Activated CD4-positive, alpha-beta T cell treated with anti-CD3 and anti-CD28 coated beads, Interleukin-2, amount 10 ng/mL, durations not matched to agents 24 days and 14 days (primary cell): ENCODE measurements at regions of chr16 and their contacts with region 1.

Region 1: GRCh38 chr16:89409161-89409711 is 81.1 kb downstream of the ANKRD11 start:
- DNase-seq: peak; percentile 89
- H3K4me3 Mint-ChIP-seq: peak overlapping the region; percentile 58
- H3K27ac Mint-ChIP-seq: peak overlapping the region; percentile 84
- H3K4me1 Mint-ChIP-seq: peaks cover 77% of the 10 kb centered on the region
- H3K27me3 Mint-ChIP-seq: no peaks in the 10 kb centered on the region

Region 2: GRCh38 chr16:88948781-88949490 is 460.3 kb before region 1 on chr16:
- intact Hi-C with region 1: no loop called
- DNase-seq: no peak
- H3K4me3 Mint-ChIP-seq: no peak overlapping the region
- H3K27ac Mint-ChIP-seq: no peak overlapping the region
- H3K4me1 Mint-ChIP-seq: no peaks in the 10 kb centered on the region
- H3K27me3 Mint-ChIP-seq: peaks cover 16% of the 10 kb centered on the region

Region 3: DNA sequence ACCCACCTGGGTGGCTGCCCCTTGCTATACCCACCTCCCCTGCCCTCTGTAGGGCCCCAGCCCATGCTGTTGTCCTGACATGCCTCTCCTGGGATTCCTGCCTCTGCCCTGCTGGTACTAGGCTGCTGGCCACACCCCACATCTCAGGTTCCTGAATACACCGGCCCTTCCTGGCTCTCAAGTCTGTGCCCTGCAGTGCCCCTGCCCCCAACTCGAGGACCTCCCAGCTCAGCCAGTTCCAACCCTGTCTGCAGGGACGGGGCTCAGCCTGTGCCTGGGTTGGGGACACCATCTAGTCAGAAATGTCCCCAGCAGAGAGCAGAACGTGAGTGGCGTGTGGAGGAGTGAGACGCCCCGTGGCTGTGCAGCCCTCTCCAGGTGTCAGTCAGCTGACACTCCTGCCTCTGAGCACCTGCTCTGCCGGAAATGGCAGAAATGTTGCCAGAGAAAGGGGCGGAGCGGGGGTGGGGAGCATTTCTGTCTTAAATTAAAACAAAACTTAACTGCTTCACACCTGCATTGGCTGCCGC is 286.8 kb before region 1 on chr16:
- intact Hi-C with region 1: no loop called
- DNase-seq: peak; percentile 79
- H3K4me3 Mint-ChIP-seq: no peak overlapping the region
- H3K27ac Mint-ChIP-seq: peak overlapping the region; percentile 34
- H3K4me1 Mint-ChIP-seq: peaks cover 6% of the 10 kb centered on the region
- H3K27me3 Mint-ChIP-seq: no peaks in the 10 kb centered on the region

Region 4: GRCh38 chr16:89330177-89330856 is 78.9 kb before region 1 on chr16:
- intact Hi-C with region 1: loop called (anchors 5 kb)
- DNase-seq: peak; percentile 80
- H3K4me3 Mint-ChIP-seq: peak overlapping the region; percentile 17
- H3K27ac Mint-ChIP-seq: peak overlapping the region; percentile 58
- H3K4me1 Mint-ChIP-seq: peaks cover 67% of the 10 kb centered on the region
- H3K27me3 Mint-ChIP-seq: no peaks in the 10 kb centered on the region

Region 5: GRCh38 chr16:89374393-89374960 is 34.8 kb before region 1 on chr16:
- intact Hi-C with region 1: no loop called
- DNase-seq: no peak
- H3K4me3 Mint-ChIP-seq: no peak overlapping the region
- H3K27ac Mint-ChIP-seq: no peak overlapping the region
- H3K4me1 Mint-ChIP-seq: peaks cover 30% of the 10 kb centered on the region
- H3K27me3 Mint-ChIP-seq: no peaks in the 10 kb centered on the region

Region 6: GRCh38 chr16:89422905-89423630 is 13.8 kb after region 1 on chr16:
- intact Hi-C with region 1: loop called (anchors 2 kb)
- DNase-seq: peak; percentile 81
- H3K4me3 Mint-ChIP-seq: peak overlapping the region; percentile 50
- H3K27ac Mint-ChIP-seq: peak overlapping the region; percentile 75
- H3K4me1 Mint-ChIP-seq: peaks cover 66% of the 10 kb centered on the region
- H3K27me3 Mint-ChIP-seq: no peaks in the 10 kb centered on the region

Region 7: DNA sequence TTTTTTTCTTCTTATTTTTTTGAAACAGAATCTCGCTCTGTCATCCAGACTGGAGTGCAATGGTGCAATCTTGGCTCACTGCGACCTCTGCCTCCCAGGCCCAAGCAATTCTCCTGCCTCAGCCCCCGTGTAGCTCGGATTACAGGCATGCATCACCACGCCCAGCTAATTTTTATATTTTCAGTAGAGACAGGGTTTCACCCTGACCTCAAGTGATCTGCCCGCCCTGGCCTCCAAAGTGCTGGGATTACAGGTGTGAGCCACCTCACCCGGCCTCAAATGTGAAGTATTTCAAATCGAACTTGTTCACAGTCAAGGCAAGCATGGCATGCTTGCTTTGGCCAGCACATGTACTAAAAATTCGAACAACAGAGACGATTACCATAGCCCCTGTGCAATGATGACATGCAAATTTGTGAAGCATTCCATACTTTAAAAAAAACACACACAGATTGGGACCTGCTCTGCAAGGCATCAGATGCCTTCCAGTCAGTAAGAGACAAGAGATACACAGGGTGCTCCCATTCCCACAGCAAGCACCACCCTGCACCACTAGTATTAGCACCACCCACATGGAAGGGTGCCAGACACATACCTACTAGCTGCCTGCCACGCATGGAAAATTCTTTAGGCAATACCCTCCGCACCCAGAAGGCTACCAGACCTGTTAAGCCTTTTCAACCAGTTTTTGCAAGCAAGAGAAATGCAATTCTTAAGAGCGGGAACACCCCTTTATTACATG is 33.9 kb after region 1 on chr16:
- intact Hi-C with region 1: loop called (anchors 5 kb)
- DNase-seq: no peak
- H3K4me3 Mint-ChIP-seq: peak overlapping the region; percentile 55
- H3K27ac Mint-ChIP-seq: peak overlapping the region; percentile 65
- H3K4me1 Mint-ChIP-seq: peaks cover 87% of the 10 kb centered on the region
- H3K27me3 Mint-ChIP-seq: no peaks in the 10 kb centered on the region

Region 8: GRCh38 chr16:89484923-89485679 is 75.9 kb after region 1 on chr16:
- intact Hi-C with region 1: loop called (anchors 2 kb)
- DNase-seq: peak; percentile 78
- H3K4me3 Mint-ChIP-seq: peak overlapping the region; percentile 78
- H3K27ac Mint-ChIP-seq: peak overlapping the region; percentile 90
- H3K4me1 Mint-ChIP-seq: peaks cover 71% of the 10 kb centered on the region
- H3K27me3 Mint-ChIP-seq: no peaks in the 10 kb centered on the region